CD4-positive, alpha-beta memory T cell (primary cell): ENCODE measurements at regions of chr13 and their contacts with region 1.

Region 1: GRCh38 chr13:21176220-21176982 is at the starts of genes MRPL57 and SKA3:
- DNase-seq: peak; percentile 92 to 95 (median 95)
- H3K4me3 ChIP-seq: peak within 1 kb of the TSS; percentile 57 to 84
- H3K4me3 Mint-ChIP-seq: peak within 1 kb of the TSS; percentile 91 to 99 (median 97)
- H3K27ac ChIP-seq: peak within 1 kb of the TSS; percentile 89
- H3K27ac Mint-ChIP-seq: peak within 1 kb of the TSS; percentile 91 to 99 (median 97)
- H3K4me1 ChIP-seq: peaks cover 21% of the 10 kb centered on the region
- H3K4me1 Mint-ChIP-seq: peaks cover 12 to 31% (median 17%) of the 10 kb centered on the region in 4 donors
- H3K27me3 ChIP-seq: no peaks in the 10 kb centered on the region
- H3K27me3 Mint-ChIP-seq: no peaks in the 10 kb centered on the region
- total RNA-seq, gene MRPL57: 22.8 to 24.5 TPM
- total RNA-seq, gene SKA3: 0.33 TPM in 1 of 2 experiments, not detected in the other

Region 2: GRCh38 chr13:20902438-20903163 is 273.8 kb before region 1 on chr13 and contains the start of gene XPO4:
- CTCF ChIA-PET with region 1: no interaction called
- POLR2A ChIA-PET with region 1: no interaction called
- intact Hi-C with region 1: loop called (anchors 1 kb)
- DNase-seq: peak; percentile 77 to 81 (median 79)
- H3K4me3 ChIP-seq: peak within 1 kb of the TSS; percentile 97 to 98
- H3K4me3 Mint-ChIP-seq: peak within 1 kb of the TSS; percentile 93 to 98 (median 96)
- H3K27ac ChIP-seq: peak within 1 kb of the TSS; percentile 89
- H3K27ac Mint-ChIP-seq: peak within 1 kb of the TSS; percentile 89 to 98 (median 95)
- H3K4me1 ChIP-seq: peaks cover 34% of the 10 kb centered on the region
- H3K4me1 Mint-ChIP-seq: peaks cover 23 to 38% (median 29%) of the 10 kb centered on the region in 4 donors
- H3K27me3 ChIP-seq: no peaks in the 10 kb centered on the region
- H3K27me3 Mint-ChIP-seq: peaks cover 0 to 2% of the 10 kb centered on the region in 2 donors
- total RNA-seq, gene XPO4: 25.5 to 27.4 TPM

Region 3: DNA sequence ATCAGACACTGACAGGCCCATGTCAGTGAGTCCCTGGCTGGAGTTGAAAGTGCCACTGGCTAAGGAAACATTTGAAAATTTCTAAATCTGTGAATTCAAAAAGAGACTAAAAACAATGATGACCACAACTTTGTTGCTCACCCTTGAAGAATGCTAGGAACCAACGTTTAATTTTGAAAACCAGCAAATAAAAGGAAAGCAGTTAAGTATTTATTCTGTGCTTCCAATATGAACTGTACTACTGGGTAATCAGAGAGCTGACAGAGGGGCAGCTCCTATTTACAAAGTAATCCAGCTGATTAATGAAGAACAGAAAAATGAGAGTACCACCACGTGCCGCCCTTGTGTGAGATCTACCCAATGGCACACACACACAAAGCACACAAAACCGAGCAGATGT is 70.3 kb before region 1 on chr13:
- CTCF ChIA-PET with region 1: interaction called, 19 read pairs
- POLR2A ChIA-PET with region 1: no interaction called
- intact Hi-C with region 1: loop called (anchors 1 kb)
- DNase-seq: no peak
- H3K4me3 ChIP-seq: no peak overlapping the region
- H3K4me3 Mint-ChIP-seq: no peak overlapping the region
- H3K27ac ChIP-seq: no peak overlapping the region
- H3K27ac Mint-ChIP-seq: no peak overlapping the region
- H3K4me1 ChIP-seq: peaks cover 3% of the 10 kb centered on the region
- H3K4me1 Mint-ChIP-seq: peaks cover 0 to 5% (median 2%) of the 10 kb centered on the region in 4 donors
- H3K27me3 ChIP-seq: no peaks in the 10 kb centered on the region
- H3K27me3 Mint-ChIP-seq: peaks cover 0 to 1% of the 10 kb centered on the region in 2 donors

Region 4: GRCh38 chr13:21458813-21459701 is 282.7 kb after region 1 on chr13 and contains the start of gene ZDHHC20:
- CTCF ChIA-PET with region 1: interaction called, 3 read pairs
- POLR2A ChIA-PET with region 1: interaction called, 21 read pairs
- intact Hi-C with region 1: loop called (anchors 5 kb)
- DNase-seq: peak; percentile 82 to 93 (median 86)
- H3K4me3 ChIP-seq: peak within 1 kb of the TSS; percentile 34 to 72
- H3K4me3 Mint-ChIP-seq: peak within 1 kb of the TSS; percentile 92 to 95 (median 94)
- H3K27ac ChIP-seq: peak within 1 kb of the TSS; percentile 86
- H3K27ac Mint-ChIP-seq: peak within 1 kb of the TSS; percentile 84 to 97 (median 94)
- H3K4me1 ChIP-seq: peaks cover 39% of the 10 kb centered on the region
- H3K4me1 Mint-ChIP-seq: peaks cover 30 to 56% (median 42%) of the 10 kb centered on the region in 4 donors
- H3K27me3 ChIP-seq: no peaks in the 10 kb centered on the region
- H3K27me3 Mint-ChIP-seq: no peaks in the 10 kb centered on the region
- total RNA-seq, gene ZDHHC20: 69.5 to 72.3 TPM

Region 5: GRCh38 chr13:21670883-21671619 is 494.6 kb after region 1 on chr13 and contains the start of gene FGF9:
- CTCF ChIA-PET with region 1: no interaction called
- POLR2A ChIA-PET with region 1: interaction called, 7 read pairs
- intact Hi-C with region 1: loop called (anchors 10 kb)
- DNase-seq: peak; percentile 83 to 89 (median 87)
- H3K4me3 ChIP-seq: peak within 1 kb of the TSS; percentile 69 to 86
- H3K4me3 Mint-ChIP-seq: peak within 1 kb of the TSS; percentile 89 to 98 (median 92)
- H3K27ac ChIP-seq: peak within 1 kb of the TSS; percentile 19
- H3K27ac Mint-ChIP-seq: peak within 1 kb of the TSS; percentile 65 to 93 (median 89)
- H3K4me1 ChIP-seq: peaks cover 45% of the 10 kb centered on the region
- H3K4me1 Mint-ChIP-seq: peaks cover 30 to 58% (median 40%) of the 10 kb centered on the region in 4 donors
- H3K27me3 ChIP-seq: peaks cover 11% of the 10 kb centered on the region
- H3K27me3 Mint-ChIP-seq: peaks cover 6 to 7% of the 10 kb centered on the region in 2 donors
- total RNA-seq, gene FGF9: 6.5 to 7.3 TPM